A673 (cell line): ENCODE measurements at regions of chr11 and their contacts with region 1.

Region 1: GRCh38 chr11:102109896-102110760 is at the start of gene YAP1:
- DNase-seq: peak; percentile 98
- H3K4me3 ChIP-seq: peak within 1 kb of the TSS; percentile 85
- H3K27ac ChIP-seq: peak within 1 kb of the TSS; percentile 97
- H3K4me1 ChIP-seq: peaks cover 35% of the 10 kb centered on the region
- H3K27me3 ChIP-seq: no peaks in the 10 kb centered on the region
- CTCF ChIP-seq: no peak
- total RNA-seq, gene YAP1: 124 and 134 TPM in 2 replicates

Region 2: GRCh38 chr11:102085864-102086551 is 24.1 kb before region 1 on chr11:
- CTCF ChIA-PET with region 1: no interaction called
- POLR2A ChIA-PET with region 1: no interaction called
- intact Hi-C with region 1: no loop called
- DNase-seq: no peak
- H3K4me3 ChIP-seq: no peak overlapping the region
- H3K27ac ChIP-seq: no peak overlapping the region
- H3K4me1 ChIP-seq: no peaks in the 10 kb centered on the region
- H3K27me3 ChIP-seq: no peaks in the 10 kb centered on the region
- CTCF ChIP-seq: no peak

Region 3: GRCh38 chr11:102187416-102188151 is 77.5 kb after region 1 on chr11:
- CTCF ChIA-PET with region 1: no interaction called
- POLR2A ChIA-PET with region 1: interaction called, 5 read pairs
- intact Hi-C with region 1: loop called (anchors 5 kb)
- DNase-seq: peak; percentile 91
- H3K4me3 ChIP-seq: peak overlapping the region; percentile 21
- H3K27ac ChIP-seq: peak overlapping the region; percentile 77
- H3K4me1 ChIP-seq: peaks cover 49% of the 10 kb centered on the region
- H3K27me3 ChIP-seq: no peaks in the 10 kb centered on the region
- CTCF ChIP-seq: no peak

Region 4: GRCh38 chr11:102279641-102280170 is 169.6 kb after region 1 on chr11:
- CTCF ChIA-PET with region 1: no interaction called
- POLR2A ChIA-PET with region 1: interaction called, 3 read pairs
- intact Hi-C with region 1: loop called (anchors 10 kb)
- DNase-seq: peak; percentile 59
- H3K4me3 ChIP-seq: peak overlapping the region; percentile 19
- H3K27ac ChIP-seq: no peak overlapping the region
- H3K4me1 ChIP-seq: peaks cover 10% of the 10 kb centered on the region
- H3K27me3 ChIP-seq: no peaks in the 10 kb centered on the region
- CTCF ChIP-seq: 0 out of 2 replicates have a peak, but pooled peaks have one; percentile 21

Region 5: GRCh38 chr11:102346748-102347461 is 236.8 kb after region 1 on chr11 and contains the start of gene BIRC2:
- CTCF ChIA-PET with region 1: no interaction called
- POLR2A ChIA-PET with region 1: no interaction called
- intact Hi-C with region 1: loop called (anchors 2 kb)
- DNase-seq: peak; percentile 98
- H3K4me3 ChIP-seq: peak within 1 kb of the TSS; percentile 59
- H3K27ac ChIP-seq: peak within 1 kb of the TSS; percentile 94
- H3K4me1 ChIP-seq: peaks cover 7% of the 10 kb centered on the region
- H3K27me3 ChIP-seq: no peaks in the 10 kb centered on the region
- CTCF ChIP-seq: peak; percentile 90
- total RNA-seq, gene BIRC2: 32.0 and 36.3 TPM in 2 replicates